Activated CD8-positive, alpha-beta memory T cell treated with anti-CD3 and anti-CD28 coated beads, Interleukin-2, amount 10 ng/mL, durations not matched to agents 7 days and 5 days (primary cell): ENCODE measurements at regions of chr14 and their contacts with region 1.

Region 1: GRCh38 chr14:52286661-52287649 is 19.5 kb downstream of the PTGDR start:
- DNase-seq: no peak
- ATAC-seq: peak; percentile 20
- H3K4me3 Mint-ChIP-seq: no peak overlapping the region
- H3K27ac Mint-ChIP-seq: peak overlapping the region; percentile 53
- H3K4me1 Mint-ChIP-seq: peaks cover 27% of the 10 kb centered on the region
- H3K27me3 Mint-ChIP-seq: no peaks in the 10 kb centered on the region

Region 2: DNA sequence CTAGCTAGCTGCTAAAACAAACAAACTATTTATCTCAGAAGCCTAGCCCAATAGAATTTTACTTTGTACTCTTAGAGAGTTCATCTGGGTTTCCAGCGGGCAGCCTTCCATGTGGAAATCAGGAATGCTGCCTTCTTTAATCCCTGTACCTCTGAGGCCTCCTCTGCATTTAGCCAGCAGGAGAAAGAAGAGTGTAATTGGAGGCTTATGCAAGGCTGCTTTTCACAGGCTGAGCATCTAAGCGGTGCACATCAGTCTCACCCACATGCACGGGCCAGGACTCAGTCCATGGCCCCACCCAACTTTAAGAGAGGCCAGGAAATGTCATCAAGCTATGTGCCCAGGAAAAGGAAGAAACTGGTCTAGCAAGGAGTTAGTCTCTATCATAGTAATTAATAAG is 33.5 kb before region 1 on chr14:
- CTCF ChIA-PET with region 1: no interaction called
- DNase-seq: no peak
- ATAC-seq: no peak
- H3K4me3 Mint-ChIP-seq: no peak overlapping the region
- H3K27ac Mint-ChIP-seq: no peak overlapping the region
- H3K4me1 Mint-ChIP-seq: no peaks in the 10 kb centered on the region
- H3K27me3 Mint-ChIP-seq: no peaks in the 10 kb centered on the region

Region 3: DNA sequence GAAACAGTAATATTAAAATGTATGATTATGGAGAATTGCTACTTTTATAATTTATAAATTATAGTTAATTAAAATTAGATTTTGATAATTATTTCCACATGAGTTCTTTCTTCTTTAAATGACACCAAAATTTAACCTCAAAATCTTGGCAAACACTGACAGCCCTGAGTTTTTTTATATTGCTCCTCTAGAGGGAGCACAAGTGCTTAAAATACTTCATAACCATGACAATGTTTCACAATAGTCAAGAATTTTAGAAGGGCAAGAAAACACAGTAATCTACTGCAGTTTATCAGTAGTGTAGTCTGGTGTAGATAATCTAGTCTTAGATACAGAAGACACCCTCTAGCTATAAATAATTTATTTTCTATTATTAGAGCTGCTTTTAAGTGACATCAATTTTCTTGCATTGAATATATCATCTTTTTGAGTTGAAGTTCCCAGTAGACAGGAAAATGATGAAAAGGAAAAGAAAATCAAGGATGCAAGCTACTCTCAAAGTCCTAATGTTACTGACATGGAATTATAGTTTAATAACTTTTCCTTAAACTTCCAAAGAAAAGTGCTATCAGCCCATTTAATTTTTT is 12.8 kb after region 1 on chr14:
- CTCF ChIA-PET with region 1: interaction called, 12 read pairs
- DNase-seq: no peak
- ATAC-seq: peak; percentile 76
- H3K4me3 Mint-ChIP-seq: no peak overlapping the region
- H3K27ac Mint-ChIP-seq: no peak overlapping the region
- H3K4me1 Mint-ChIP-seq: peaks cover 40% of the 10 kb centered on the region
- H3K27me3 Mint-ChIP-seq: no peaks in the 10 kb centered on the region

Region 4: DNA sequence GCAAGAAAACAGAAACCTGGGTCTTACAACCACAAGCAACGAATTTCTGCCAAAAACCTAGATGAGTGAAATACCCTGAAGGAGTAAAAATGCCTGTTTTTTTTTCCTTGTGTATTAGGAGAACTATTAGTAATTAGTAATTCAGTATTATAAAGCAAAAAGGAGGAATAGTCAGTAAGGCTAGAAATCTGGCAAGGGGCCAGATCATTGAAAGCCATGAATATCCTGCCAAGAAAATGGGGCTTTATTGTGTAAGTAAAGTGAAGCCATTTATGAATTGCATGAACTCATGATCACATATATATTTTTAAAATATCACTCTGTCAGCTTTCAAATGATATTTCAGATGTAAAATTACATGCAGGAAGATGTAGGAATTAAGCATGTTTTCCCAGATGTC is 207.5 kb after region 1 on chr14:
- CTCF ChIA-PET with region 1: no interaction called
- DNase-seq: no peak
- ATAC-seq: no peak
- H3K4me3 Mint-ChIP-seq: no peak overlapping the region
- H3K27ac Mint-ChIP-seq: no peak overlapping the region
- H3K4me1 Mint-ChIP-seq: no peaks in the 10 kb centered on the region
- H3K27me3 Mint-ChIP-seq: no peaks in the 10 kb centered on the region